Caco-2 (cell line): ENCODE measurements at regions of chr2 and their contacts with region 1.

Region 1: DNA sequence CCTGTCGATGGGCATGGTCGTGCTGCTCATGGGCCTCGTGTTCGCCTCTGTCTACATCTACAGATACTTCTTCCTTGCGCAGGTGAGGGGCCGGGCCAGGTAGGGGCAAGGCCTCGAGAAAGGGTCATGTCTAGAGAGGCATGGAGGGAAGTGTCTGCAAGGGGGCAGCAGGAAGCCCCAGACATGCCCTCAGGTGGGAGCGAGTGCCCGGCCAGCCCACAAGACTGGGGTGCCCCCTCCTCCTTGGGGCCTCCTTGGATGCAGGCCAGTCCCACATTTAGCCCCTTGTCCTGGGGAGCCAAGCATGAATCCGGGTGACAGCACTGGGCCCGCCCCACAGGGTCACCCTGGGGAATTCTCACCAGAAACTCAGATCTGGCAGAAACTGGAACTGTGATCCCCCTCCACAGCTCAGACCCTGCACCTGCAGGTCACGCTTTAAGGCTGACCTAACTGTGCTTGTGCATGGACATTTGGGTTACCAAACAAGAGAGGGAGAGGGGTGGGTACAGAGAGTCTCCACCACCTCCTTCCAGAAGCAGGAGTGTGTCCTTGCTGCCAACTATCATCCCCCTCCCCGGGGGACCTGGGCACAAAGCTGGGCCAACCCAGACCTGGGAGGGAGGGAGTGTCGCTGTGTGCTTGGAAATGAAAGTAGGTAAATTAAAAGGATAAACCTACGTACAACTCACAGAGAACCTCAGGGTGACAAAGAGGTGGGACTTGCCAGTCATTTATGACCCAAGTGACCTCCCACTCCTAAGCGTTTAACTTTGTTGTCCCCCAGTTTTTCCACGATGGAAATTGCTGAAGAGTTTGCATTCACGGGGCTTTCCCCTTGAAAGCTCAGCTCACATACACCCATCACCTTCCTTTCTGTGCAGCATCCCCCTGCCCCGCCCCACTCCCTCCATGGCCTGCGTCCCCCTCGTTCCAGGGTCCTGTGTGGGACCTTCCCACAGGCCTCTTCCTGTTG is 9.0 kb downstream of the ITM2C start:
- DNase-seq: no peak
- H3K4me3 ChIP-seq: no peak overlapping the region
- H3K4me3 Mint-ChIP-seq: no peak overlapping the region
- H3K27ac Mint-ChIP-seq: peak overlapping the region; percentile 65
- H3K4me1 ChIP-seq: peaks cover 37% of the 10 kb centered on the region
- H3K4me1 Mint-ChIP-seq: peaks cover 9% of the 10 kb centered on the region
- H3K27me3 ChIP-seq: no peaks in the 10 kb centered on the region
- H3K27me3 Mint-ChIP-seq: no peaks in the 10 kb centered on the region
- CTCF ChIP-seq: no peak

Region 2: DNA sequence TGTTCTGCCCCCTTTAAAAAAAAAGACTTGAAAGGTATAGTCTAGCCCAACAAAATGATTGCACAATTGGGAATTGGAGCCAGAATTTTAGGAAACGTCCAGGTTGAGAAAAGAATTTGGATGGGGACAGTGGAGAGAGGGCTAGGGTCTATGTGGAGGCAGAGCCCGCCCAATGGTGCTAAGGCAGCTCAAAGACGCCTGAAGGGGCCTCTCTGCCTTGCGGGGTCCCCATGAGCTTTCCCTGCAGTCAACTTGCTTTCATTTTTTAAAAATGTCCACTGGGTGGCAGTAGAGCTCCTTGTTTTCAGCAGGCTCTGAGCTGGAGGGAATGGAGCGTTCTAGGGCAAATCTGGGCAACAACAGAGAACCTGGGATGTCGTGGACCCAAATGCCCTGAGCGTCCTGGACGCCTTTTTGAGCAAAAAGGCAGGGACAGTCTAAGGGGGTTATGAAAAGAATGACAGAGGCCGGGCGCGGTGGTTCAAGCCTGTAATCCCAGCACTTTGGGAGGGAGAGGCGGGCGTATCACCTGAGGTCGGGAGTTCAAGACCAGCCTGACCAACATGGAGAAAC is 49.3 kb before region 1 on chr2:
- CTCF ChIA-PET with region 1: interaction called, 6 read pairs
- POLR2A ChIA-PET with region 1: no interaction called
- intact Hi-C with region 1: loop called (anchors 2 kb)
- DNase-seq: peak; percentile 72 to 77
- H3K4me3 ChIP-seq: no peak overlapping the region
- H3K4me3 Mint-ChIP-seq: no peak overlapping the region
- H3K27ac Mint-ChIP-seq: no peak overlapping the region
- H3K4me1 ChIP-seq: no peaks in the 10 kb centered on the region
- H3K4me1 Mint-ChIP-seq: no peaks in the 10 kb centered on the region
- H3K27me3 ChIP-seq: no peaks in the 10 kb centered on the region
- H3K27me3 Mint-ChIP-seq: no peaks in the 10 kb centered on the region
- CTCF ChIP-seq: peak; percentile 51 to 60

Region 3: GRCh38 chr2:230895536-230896345 is 22.0 kb after region 1 on chr2:
- CTCF ChIA-PET with region 1: no interaction called
- POLR2A ChIA-PET with region 1: interaction called, 13 read pairs
- intact Hi-C with region 1: loop called (anchors 1 kb)
- DNase-seq: peak; percentile 65 to 78
- H3K4me3 ChIP-seq: no peak overlapping the region
- H3K4me3 Mint-ChIP-seq: peak overlapping the region; percentile 50
- H3K27ac Mint-ChIP-seq: peak overlapping the region; percentile 69
- H3K4me1 ChIP-seq: peaks cover 15% of the 10 kb centered on the region
- H3K4me1 Mint-ChIP-seq: peaks cover 9% of the 10 kb centered on the region
- H3K27me3 ChIP-seq: no peaks in the 10 kb centered on the region
- H3K27me3 Mint-ChIP-seq: no peaks in the 10 kb centered on the region
- CTCF ChIP-seq: no peak

Region 4: DNA sequence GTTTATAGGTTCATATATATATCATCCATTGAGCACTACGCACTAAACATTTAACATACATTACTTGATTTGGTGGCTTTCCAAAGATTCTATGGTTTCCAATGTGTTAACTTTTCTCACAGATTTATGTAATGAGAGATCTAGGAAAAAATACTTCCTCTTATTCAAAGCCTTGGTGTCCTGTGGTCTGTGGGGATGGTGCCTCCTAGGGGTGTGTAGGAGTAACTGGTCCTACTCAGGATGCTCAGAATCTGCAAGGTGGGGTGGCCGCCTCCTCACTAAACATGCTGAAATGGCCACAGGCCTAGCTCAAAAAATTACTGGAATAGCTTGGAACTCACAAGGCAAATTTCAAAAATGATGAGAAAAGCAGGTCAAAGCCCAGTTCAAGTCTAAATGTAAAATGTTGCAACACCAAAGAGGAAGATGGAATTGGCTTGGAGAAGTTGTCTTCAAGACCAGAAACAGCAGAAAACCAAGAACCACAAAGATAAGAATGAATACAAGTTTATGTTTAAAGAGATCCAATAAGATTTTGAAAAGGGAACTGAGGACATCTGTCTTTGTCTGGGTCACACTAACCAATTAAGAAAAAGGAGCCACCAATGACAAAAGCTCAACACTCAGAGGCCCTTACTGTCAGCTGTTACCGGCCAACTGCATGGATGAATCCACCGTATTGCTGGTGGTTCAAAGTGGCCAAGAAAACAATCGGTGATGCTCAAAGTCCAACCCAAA is 39.8 kb after region 1 on chr2:
- CTCF ChIA-PET with region 1: no interaction called
- POLR2A ChIA-PET with region 1: no interaction called
- intact Hi-C with region 1: loop called (anchors 5 kb)
- DNase-seq: peak in 1 of 2 experiments; percentile 9
- H3K4me3 ChIP-seq: no peak overlapping the region
- H3K4me3 Mint-ChIP-seq: no peak overlapping the region
- H3K27ac Mint-ChIP-seq: no peak overlapping the region
- H3K4me1 ChIP-seq: no peaks in the 10 kb centered on the region
- H3K4me1 Mint-ChIP-seq: peaks cover 5% of the 10 kb centered on the region
- H3K27me3 ChIP-seq: no peaks in the 10 kb centered on the region
- H3K27me3 Mint-ChIP-seq: peaks cover 3% of the 10 kb centered on the region
- CTCF ChIP-seq: peak; percentile 14 to 42

Region 5: GRCh38 chr2:231034291-231034882 is 160.6 kb after region 1 on chr2:
- CTCF ChIA-PET with region 1: no interaction called
- POLR2A ChIA-PET with region 1: no interaction called
- intact Hi-C with region 1: loop called (anchors 2 kb)
- DNase-seq: peak; percentile 66 to 70
- H3K4me3 ChIP-seq: no peak overlapping the region
- H3K4me3 Mint-ChIP-seq: no peak overlapping the region
- H3K27ac Mint-ChIP-seq: peak overlapping the region; percentile 97
- H3K4me1 ChIP-seq: peaks cover 63% of the 10 kb centered on the region
- H3K4me1 Mint-ChIP-seq: peaks cover 17% of the 10 kb centered on the region
- H3K27me3 ChIP-seq: no peaks in the 10 kb centered on the region
- H3K27me3 Mint-ChIP-seq: no peaks in the 10 kb centered on the region
- CTCF ChIP-seq: no peak